ENCODE measurements at regions of chr7 and their contacts with region 1.

Region 1: GRCh38 chr7:128381161-128381821 is 19.8 kb upstream of the PRRT4 start:
- DNase-seq: peak; percentile 89
- ATAC-seq: peak; percentile 80
- H3K4me3 Mint-ChIP-seq: no peak overlapping the region
- H3K27ac Mint-ChIP-seq: no peak overlapping the region
- H3K4me1 Mint-ChIP-seq: peaks cover 12% of the 10 kb centered on the region
- H3K27me3 Mint-ChIP-seq: peaks cover 9% of the 10 kb centered on the region; the same call in 1 of the 2 replicates
- CTCF ChIP-seq: peak; percentile 94

Region 2: DNA sequence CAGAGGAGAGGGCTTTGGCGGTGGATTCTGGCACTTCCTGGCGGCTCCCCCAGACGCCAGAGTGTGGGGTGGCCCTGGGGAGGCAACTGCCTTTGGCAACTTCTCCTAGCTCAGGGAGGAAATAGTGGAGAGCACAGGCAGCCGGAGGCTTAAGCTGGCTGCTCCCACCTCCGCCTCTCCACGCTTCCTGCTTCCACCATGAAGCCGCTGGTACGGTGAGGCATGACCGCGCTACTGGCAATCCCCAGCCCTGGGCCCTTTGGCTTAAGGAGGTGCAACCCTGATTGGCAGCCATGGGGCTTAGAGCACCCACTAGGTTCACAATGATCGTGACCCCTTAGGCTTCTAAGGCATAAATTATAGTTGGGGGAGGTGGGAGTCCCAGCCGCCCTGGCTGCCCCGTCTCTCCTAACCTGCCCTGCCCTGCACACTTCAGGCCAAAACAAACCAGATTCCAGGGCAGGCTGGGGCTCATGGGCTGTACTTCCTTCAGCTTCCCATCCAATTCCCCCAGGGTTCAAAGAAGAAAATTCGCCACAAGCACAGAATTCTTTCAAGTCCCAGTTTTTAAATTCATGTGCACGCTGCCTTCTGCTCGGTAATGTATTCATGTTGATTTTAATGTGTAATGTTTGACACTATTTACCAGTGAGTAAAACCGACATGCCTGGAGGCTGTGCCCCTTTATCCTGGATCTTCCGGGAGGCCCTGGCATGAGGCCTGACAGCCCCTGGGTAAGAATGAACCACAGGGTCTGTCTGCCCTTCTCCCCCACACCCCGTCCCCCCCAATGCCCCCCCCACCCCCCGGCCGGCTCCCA is 259.4 kb before region 1 on chr7:
- CTCF ChIA-PET with region 1: no interaction called
- POLR2A ChIA-PET with region 1: no interaction called
- DNase-seq: no peak
- ATAC-seq: peak; percentile 56
- H3K4me3 Mint-ChIP-seq: no peak overlapping the region
- H3K27ac Mint-ChIP-seq: no peak overlapping the region
- H3K4me1 Mint-ChIP-seq: peaks cover 23% of the 10 kb centered on the region
- H3K27me3 Mint-ChIP-seq: peaks cover 3% of the 10 kb centered on the region
- CTCF ChIP-seq: no peak

Region 3: DNA sequence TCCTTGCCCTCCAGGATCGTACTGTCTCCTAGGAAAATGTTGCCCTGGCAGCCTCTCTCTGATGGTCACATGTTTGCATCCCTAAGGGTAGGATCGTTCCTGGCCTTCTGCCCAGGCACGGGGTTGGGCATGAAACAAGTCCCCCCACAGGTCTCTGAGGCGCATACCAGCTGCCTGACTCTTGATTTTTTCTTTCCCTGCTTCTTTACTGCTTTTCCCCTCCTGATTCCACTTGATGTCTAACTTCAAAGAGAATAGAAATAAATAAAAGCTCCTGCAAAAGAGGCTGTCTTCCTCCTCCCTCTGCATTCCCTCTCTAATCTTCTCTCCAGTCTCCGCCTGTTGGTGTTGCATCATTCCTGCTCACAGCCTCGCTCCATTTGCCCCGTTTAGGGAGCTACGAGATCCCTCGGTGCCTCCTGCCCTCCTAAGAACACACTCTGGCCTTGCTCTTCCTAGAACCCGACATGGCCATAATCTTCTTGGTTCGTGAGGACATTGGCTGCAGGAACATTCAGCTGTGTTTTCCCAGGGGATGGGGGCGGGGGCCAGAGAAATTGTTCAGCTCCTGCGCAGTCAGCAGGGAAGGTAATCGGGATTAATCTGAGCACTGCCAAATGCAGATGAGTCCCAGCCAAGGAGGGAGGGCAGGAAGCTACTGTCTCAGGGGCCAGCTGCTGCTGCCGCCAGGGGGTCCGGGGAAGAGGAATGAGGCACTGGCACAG is 114.2 kb before region 1 on chr7:
- CTCF ChIA-PET with region 1: interaction called, 15 read pairs
- POLR2A ChIA-PET with region 1: no interaction called
- DNase-seq: peak; percentile 59
- ATAC-seq: peak; percentile 76
- H3K4me3 Mint-ChIP-seq: peak overlapping the region; percentile 47
- H3K27ac Mint-ChIP-seq: no peak overlapping the region
- H3K4me1 Mint-ChIP-seq: peaks cover 40% of the 10 kb centered on the region
- H3K27me3 Mint-ChIP-seq: peaks cover 18% of the 10 kb centered on the region
- CTCF ChIP-seq: no peak

Region 4: GRCh38 chr7:128318691-128319090 is 62.6 kb before region 1 on chr7:
- CTCF ChIA-PET with region 1: no interaction called
- POLR2A ChIA-PET with region 1: no interaction called
- DNase-seq: no peak
- ATAC-seq: no peak
- H3K4me3 Mint-ChIP-seq: no peak overlapping the region
- H3K27ac Mint-ChIP-seq: no peak overlapping the region
- H3K4me1 Mint-ChIP-seq: no peaks in the 10 kb centered on the region
- H3K27me3 Mint-ChIP-seq: no peaks in the 10 kb centered on the region
- CTCF ChIP-seq: no peak

Region 5: DNA sequence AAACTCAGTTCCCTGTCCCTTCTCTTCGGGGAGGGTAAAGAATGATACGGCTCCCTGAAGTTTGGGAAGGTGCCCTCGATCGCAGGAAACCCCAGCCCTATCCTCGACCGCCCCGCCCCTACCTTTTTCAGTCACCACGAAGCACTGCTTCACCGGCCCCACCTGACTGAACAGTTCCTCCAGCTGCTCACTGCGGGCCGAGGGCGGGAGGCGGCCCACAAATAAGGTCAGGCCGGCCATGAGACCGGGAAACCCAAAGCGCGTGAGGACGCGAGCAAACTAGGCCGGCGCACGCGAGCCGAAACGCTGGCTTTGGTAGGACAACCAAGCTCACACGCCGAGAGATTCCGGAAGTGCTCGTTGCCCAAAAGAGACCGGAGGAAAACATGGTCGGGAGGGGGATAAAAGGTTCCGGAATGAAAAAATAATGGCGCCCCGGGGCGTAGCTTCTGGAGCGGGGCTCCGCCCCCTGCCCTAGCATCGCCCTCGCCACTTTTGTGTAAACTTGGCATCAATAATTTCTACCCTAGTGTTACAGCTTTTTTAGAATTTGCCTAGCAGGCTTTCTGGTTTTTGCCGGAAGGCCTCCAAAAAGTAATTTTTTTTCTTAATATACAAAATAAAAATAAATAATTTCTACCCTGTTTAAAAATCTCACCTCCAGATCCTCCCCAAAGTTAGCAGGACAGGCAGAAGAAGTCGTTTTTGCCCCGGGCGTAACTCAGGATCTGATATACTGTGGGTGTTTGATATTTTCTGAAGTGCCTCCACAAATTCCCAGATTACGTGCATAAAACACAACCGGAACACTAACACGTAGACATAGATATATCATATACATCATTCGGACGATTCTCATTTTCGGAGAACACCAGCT is 37.5 kb before region 1 on chr7 and contains the start of gene RBM28:
- CTCF ChIA-PET with region 1: interaction called, 138 read pairs
- POLR2A ChIA-PET with region 1: no interaction called
- DNase-seq: peak; percentile 81
- ATAC-seq: peak; percentile 92
- H3K4me3 Mint-ChIP-seq: peak within 1 kb of the TSS; percentile 91
- H3K27ac Mint-ChIP-seq: peak within 1 kb of the TSS; percentile 91
- H3K4me1 Mint-ChIP-seq: peaks cover 11% of the 10 kb centered on the region
- H3K27me3 Mint-ChIP-seq: peaks cover 20% of the 10 kb centered on the region
- CTCF ChIP-seq: no peak
- total RNA-seq, gene RBM28: 51.5 to 66.1 TPM (median 56.2 TPM) in 3 replicates

Region 6: DNA sequence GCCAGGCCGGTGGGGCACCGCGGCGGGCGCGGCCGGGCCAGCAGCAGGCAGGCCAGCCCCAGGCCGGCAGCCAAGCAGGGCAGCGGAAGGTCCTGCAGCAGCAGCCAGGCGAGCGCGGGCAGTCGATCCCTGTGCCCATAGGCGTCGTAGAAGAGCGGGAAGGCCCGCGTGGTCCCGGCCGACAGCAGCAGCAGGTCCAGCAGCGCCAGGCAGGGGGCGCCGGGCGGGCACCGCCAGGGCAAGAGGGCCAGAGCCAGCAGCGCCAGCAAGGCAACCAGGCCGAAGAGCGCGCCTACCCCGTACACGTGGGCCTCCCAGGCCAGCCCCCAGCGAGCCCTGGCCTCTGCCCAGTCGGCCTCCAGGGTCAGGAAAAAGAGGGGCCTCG is 29.1 kb before region 1 on chr7:
- CTCF ChIA-PET with region 1: interaction called, 138 read pairs
- POLR2A ChIA-PET with region 1: no interaction called
- DNase-seq: peak; percentile 88
- ATAC-seq: peak; percentile 82
- H3K4me3 Mint-ChIP-seq: no peak overlapping the region
- H3K27ac Mint-ChIP-seq: no peak overlapping the region
- H3K4me1 Mint-ChIP-seq: peaks cover 6% of the 10 kb centered on the region
- H3K27me3 Mint-ChIP-seq: peaks cover 84% of the 10 kb centered on the region
- CTCF ChIP-seq: peak; percentile 63

Region 7: GRCh38 chr7:128361411-128362379 is 19.6 kb before region 1 on chr7 and contains the start of gene PRRT4:
- CTCF ChIA-PET with region 1: interaction called, 107 read pairs
- POLR2A ChIA-PET with region 1: no interaction called
- DNase-seq: peak; percentile 38
- ATAC-seq: peak; percentile 40
- H3K4me3 Mint-ChIP-seq: peak within 1 kb of the TSS; percentile 74
- H3K27ac Mint-ChIP-seq: no peak within 1 kb of the TSS
- H3K4me1 Mint-ChIP-seq: peaks cover 23% of the 10 kb centered on the region
- H3K27me3 Mint-ChIP-seq: peaks cover 94% of the 10 kb centered on the region
- CTCF ChIP-seq: no peak
- total RNA-seq, gene PRRT4: 0.92 to 1.5 TPM (median 1.2 TPM) in 3 replicates

Region 8: DNA sequence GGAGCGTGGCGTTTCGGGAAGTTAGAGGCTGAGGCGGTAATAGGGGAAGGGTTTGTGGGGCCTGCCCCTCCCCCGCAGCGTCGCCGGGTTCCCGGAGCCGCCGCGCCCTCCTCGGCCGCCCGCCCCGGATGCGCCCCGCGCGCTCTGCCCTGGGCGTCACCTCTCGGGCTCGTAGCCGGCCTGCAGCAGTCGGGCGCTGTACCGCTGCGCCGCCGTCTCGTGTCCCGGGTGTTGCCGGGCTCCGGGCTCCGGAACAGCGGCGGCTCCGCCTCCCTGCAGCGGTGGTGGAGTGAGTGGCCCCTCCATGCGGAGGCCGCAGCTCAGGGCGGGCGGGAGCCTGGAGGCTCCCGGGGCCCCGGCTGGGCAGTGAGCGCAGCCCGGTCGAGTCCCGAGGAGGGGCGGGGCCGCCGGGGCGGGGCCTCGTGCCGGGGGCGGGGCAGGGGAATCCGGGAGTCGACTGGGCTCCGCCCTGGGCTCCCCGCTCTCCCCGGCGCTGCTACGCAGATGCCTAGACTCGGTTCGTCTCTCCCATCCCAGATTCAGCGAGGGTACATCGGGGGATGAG is 28.4 kb after region 1 on chr7 and contains the start of gene IMPDH1:
- CTCF ChIA-PET with region 1: interaction called, 19 read pairs
- POLR2A ChIA-PET with region 1: no interaction called
- DNase-seq: peak; percentile 92
- ATAC-seq: peak; percentile 82
- H3K4me3 Mint-ChIP-seq: peak within 1 kb of the TSS; percentile 91
- H3K27ac Mint-ChIP-seq: no peak within 1 kb of the TSS; the same call in 1 of the 2 replicates
- H3K4me1 Mint-ChIP-seq: peaks cover 29% of the 10 kb centered on the region
- H3K27me3 Mint-ChIP-seq: peaks cover 86% of the 10 kb centered on the region
- CTCF ChIP-seq: no peak
- total RNA-seq, gene IMPDH1: 42.8 to 54.2 TPM (median 44.1 TPM) in 3 replicates

Region 9: DNA sequence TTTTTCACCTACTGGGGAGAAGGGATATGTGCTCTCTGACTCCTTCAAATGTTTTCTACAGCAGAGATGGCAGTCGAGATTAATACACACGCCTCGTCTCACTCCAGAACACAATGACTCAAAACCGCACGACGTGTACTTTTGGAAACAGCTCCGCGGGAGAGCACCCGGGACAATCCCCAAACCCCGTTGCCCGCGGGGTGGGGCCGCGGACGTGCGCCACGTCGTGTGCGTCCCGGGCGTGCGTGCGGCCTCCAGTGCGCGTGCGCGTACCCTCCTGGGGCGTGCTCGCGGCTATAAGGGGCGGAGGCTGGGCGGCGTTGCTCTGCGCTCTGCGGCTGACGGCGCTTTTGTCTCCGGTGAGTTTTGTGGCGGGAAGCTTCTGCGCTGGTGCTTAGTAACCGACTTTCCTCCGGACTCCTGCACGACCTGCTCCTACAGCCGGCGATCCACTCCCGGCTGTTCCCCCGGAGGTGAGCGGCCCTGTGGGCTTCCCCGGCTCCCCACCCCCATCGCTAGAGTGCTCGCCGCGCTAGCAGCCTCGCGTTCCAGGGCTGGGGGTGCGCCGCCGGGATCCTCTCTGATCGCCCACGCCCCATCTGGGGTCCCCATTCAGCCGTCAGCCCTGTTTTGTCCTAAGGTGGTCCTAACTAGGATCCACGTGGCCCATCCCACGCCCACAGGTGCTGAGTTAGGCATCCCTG is 74.4 kb after region 1 on chr7 and contains the start of gene HILPDA:
- CTCF ChIA-PET with region 1: interaction called, 30 read pairs
- POLR2A ChIA-PET with region 1: no interaction called
- DNase-seq: peak; percentile 82
- ATAC-seq: peak; percentile 63
- H3K4me3 Mint-ChIP-seq: peak within 1 kb of the TSS; percentile 95
- H3K27ac Mint-ChIP-seq: peak within 1 kb of the TSS; percentile 92
- H3K4me1 Mint-ChIP-seq: peaks cover 69% of the 10 kb centered on the region
- H3K27me3 Mint-ChIP-seq: peaks cover 12% of the 10 kb centered on the region
- CTCF ChIP-seq: no peak
- total RNA-seq, gene HILPDA: 28.3 to 29.5 TPM (median 28.7 TPM) in 3 replicates

Measured in WTC11 (cell line).